CD4-positive, alpha-beta T cell (primary cell): ENCODE measurements at regions of chr14 and their contacts with region 1.

Region 1: GRCh38 chr14:105281371-105282097 is 19.3 kb downstream of the BRF1 start:
- DNase-seq: peak in 4 of 14 experiments; percentile 43 to 67 (median 57)
- ATAC-seq: no peak
- H3K4me3 ChIP-seq: no peak overlapping the region
- H3K4me3 Mint-ChIP-seq: no peak overlapping the region
- H3K27ac ChIP-seq: no peak overlapping the region
- H3K27ac Mint-ChIP-seq: no peak overlapping the region
- H3K4me1 ChIP-seq: peaks cover 23% of the 10 kb centered on the region
- H3K4me1 Mint-ChIP-seq: peaks cover 36% of the 10 kb centered on the region
- H3K27me3 ChIP-seq: no peaks in the 10 kb centered on the region
- H3K27me3 Mint-ChIP-seq: no peaks in the 10 kb centered on the region
- CTCF ChIP-seq: peak; percentile 59

Region 2: GRCh38 chr14:105203057-105203531 is 78.4 kb before region 1 on chr14:
- CTCF ChIA-PET with region 1: interaction called, 3 read pairs
- POLR2A ChIA-PET with region 1: no interaction called
- intact Hi-C with region 1: loop called in 1 of 2 experiments (anchors 5 kb)
- DNase-seq: peak; percentile 40 to 76 (median 52)
- ATAC-seq: peak; percentile 48
- H3K4me3 ChIP-seq: no peak overlapping the region
- H3K4me3 Mint-ChIP-seq: no peak overlapping the region
- H3K27ac ChIP-seq: no peak overlapping the region
- H3K27ac Mint-ChIP-seq: no peak overlapping the region
- H3K4me1 ChIP-seq: peaks cover 26% of the 10 kb centered on the region
- H3K4me1 Mint-ChIP-seq: peaks cover 9% of the 10 kb centered on the region
- H3K27me3 ChIP-seq: peaks cover 22 to 27% of the 10 kb centered on the region in 2 experiments
- H3K27me3 Mint-ChIP-seq: peaks cover 31% of the 10 kb centered on the region
- CTCF ChIP-seq: peak; percentile 97

Region 3: GRCh38 chr14:105248368-105248756 is 33.2 kb before region 1 on chr14 and contains the start of gene BTBD6:
- CTCF ChIA-PET with region 1: no interaction called
- POLR2A ChIA-PET with region 1: no interaction called
- intact Hi-C with region 1: no loop called
- DNase-seq: peak; percentile 76 to 96 (median 86)
- ATAC-seq: peak; percentile 88
- H3K4me3 ChIP-seq: peak within 1 kb of the TSS; percentile 66
- H3K4me3 Mint-ChIP-seq: peak within 1 kb of the TSS; percentile 87
- H3K27ac ChIP-seq: peak within 1 kb of the TSS; percentile 33 to 53
- H3K27ac Mint-ChIP-seq: peak within 1 kb of the TSS; percentile 82
- H3K4me1 ChIP-seq: peaks cover 27% of the 10 kb centered on the region
- H3K4me1 Mint-ChIP-seq: peaks cover 27% of the 10 kb centered on the region
- H3K27me3 ChIP-seq: no peaks in the 10 kb centered on the region
- H3K27me3 Mint-ChIP-seq: no peaks in the 10 kb centered on the region
- CTCF ChIP-seq: no peak
- total RNA-seq, gene BTBD6: 36.9 to 37.6 TPM